ENCODE measurements at regions of chr17 and their contacts with region 1.

Region 1: DNA sequence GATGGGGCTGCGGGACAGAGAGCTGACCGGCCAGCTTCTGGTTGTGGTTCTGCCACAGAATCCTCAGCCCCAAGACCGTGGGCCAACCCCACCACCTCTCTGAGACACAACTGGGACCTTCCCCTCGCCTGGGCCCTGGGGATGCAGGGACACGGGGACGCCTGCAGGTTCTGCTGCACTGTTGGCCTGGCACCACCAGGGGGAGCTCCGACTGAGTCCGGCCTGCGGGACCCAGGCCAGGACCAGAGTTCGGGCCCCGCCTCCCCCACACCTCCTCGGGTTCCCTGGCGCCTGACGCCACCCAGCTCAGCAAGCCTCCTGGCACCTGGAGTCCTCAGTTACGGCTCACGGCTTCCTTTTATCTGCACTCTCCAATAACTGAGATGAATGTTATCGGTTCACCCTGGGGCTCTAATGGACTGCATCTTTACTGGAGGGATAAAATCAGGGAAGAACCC is 27.3 kb downstream of the TBC1D16 start:
- DNase-seq: peak; percentile 53 to 75
- ATAC-seq: peak; percentile 73 to 84
- H3K4me3 ChIP-seq: no peak overlapping the region
- H3K27ac ChIP-seq: peak overlapping the region in 2 of 4 donors; percentile 14 to 35
- H3K4me1 ChIP-seq: peaks cover 0 to 3% of the 10 kb centered on the region in 2 donors
- H3K27me3 ChIP-seq: no peaks in the 10 kb centered on the region
- CTCF ChIP-seq: peak; percentile 78 to 95 (median 90)
- POLR2A ChIP-seq: no peak

Region 2: DNA sequence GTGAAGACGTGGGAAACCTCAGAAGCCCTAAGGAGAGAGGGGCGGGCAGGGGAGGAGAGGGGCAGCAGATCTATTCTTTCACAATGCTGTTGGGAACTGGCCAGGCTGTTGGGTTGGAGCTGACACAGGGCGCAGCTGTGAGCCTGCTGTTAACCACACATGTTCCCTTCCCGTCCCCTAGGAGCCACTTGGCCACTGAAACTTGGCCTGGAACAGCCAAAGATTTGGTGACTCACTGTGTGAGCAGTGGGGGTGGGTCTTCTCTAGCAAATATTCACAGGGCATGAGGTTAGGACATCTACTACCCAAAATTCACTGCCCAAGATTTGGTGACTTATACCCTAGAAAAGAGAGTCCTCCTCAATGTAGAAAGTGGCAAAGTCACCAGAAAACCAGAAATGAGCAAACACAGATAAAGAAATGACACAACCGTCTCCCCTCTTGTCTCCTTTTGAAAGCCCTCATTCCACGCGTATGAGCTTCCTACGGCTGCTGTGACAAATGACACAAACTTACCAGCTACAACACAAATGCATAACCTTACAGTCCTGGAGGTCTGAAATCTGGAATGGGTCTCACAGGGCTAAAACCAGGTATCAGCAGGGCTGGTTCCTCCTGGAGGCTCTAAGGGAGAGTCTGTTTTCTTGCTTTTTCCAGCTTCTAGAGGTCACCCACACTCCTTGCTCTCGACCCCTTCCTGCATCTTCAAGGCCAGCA is 21.0 kb after region 1 on chr17:
- in situ Hi-C with region 1: no loop called
- intact Hi-C with region 1: loop called (anchors 2 kb)
- DNase-seq: peak; percentile 80 to 91
- ATAC-seq: peak; percentile 84 to 92
- H3K4me3 ChIP-seq: peak overlapping the region in 1 of 4 donors; percentile 24
- H3K27ac ChIP-seq: peak overlapping the region; percentile 44 to 80 (median 73)
- H3K4me1 ChIP-seq: peaks cover 27 to 29% of the 10 kb centered on the region in 2 donors
- H3K27me3 ChIP-seq: peaks cover 0 to 19% (median 17%) of the 10 kb centered on the region in 3 donors
- CTCF ChIP-seq: no peak
- POLR2A ChIP-seq: no peak

Region 3: DNA sequence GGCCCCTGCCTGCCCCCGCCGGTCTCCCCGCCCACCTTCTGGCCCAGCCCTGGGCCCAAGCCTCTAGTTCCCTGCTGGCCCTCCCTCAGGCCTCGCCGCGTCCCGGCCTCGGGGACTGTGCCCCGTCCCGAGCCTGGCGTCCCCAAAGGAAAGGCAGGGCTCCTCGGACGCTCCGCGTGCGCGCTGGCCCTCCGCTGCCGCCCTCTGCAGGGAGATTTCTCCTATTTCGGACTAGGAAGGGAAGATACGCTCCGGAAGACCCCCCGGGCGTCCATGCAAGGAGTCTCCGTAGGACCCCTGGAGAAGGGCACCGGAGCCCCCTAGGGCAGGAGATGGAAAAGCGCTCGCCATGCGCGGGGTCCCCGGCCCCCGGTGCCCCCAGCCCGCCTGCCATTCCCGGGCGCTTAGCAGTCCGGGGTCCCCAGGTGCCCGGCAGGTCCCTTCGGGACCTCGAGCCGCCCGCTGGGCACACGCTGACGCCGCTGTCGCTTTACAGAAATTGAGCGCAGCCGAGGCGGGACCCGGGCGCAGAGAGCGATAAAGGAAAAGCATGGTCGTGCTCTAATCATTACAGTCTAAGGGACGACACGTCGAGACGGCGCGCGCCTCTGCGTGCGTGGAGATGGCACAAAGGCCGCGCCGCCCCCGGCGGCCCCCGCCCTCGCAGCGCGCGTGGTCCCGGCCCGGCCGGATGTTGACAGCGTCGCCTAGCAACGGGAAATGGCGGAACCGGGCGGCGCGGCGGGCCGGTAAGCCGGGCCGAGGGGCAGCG is 27.7 kb after region 1 on chr17 and contains the start of gene CCDC40:
- in situ Hi-C with region 1: no loop called
- intact Hi-C with region 1: loop called (anchors 1 kb)
- DNase-seq: peak; percentile 67 to 70
- ATAC-seq: peak; percentile 83 to 86
- H3K4me3 ChIP-seq: peak within 1 kb of the TSS; percentile 69 to 92 (median 84)
- H3K27ac ChIP-seq: peak within 1 kb of the TSS; percentile 77 to 91 (median 84)
- H3K4me1 ChIP-seq: peaks cover 5 to 11% of the 10 kb centered on the region in 2 donors
- H3K27me3 ChIP-seq: peaks cover 0 to 14% (median 10%) of the 10 kb centered on the region in 3 donors
- CTCF ChIP-seq: no peak
- POLR2A ChIP-seq: peak; percentile 49 to 58
- total RNA-seq, gene CCDC40: 0.18 to 2.1 (median 1.1) TPM

Region 4: GRCh38 chr17:80082403-80083135 is 74.2 kb after region 1 on chr17:
- in situ Hi-C with region 1: no loop called
- intact Hi-C with region 1: loop called (anchors 2 kb)
- DNase-seq: peak in 1 of 2 donors; percentile 55
- ATAC-seq: peak; percentile 66 to 75
- H3K4me3 ChIP-seq: peak overlapping the region in 3 of 4 donors; percentile 7 to 45 (median 42)
- H3K27ac ChIP-seq: no peak overlapping the region
- H3K4me1 ChIP-seq: peaks cover 0 to 6% of the 10 kb centered on the region in 2 donors
- H3K27me3 ChIP-seq: no peaks in the 10 kb centered on the region
- CTCF ChIP-seq: peak; percentile 38 to 83 (median 68)
- POLR2A ChIP-seq: no peak

Region 5: GRCh38 chr17:80147035-80147836 is 138.8 kb after region 1 on chr17 and contains the start of gene EIF4A3:
- in situ Hi-C with region 1: no loop called
- intact Hi-C with region 1: loop called (anchors 5 kb)
- DNase-seq: peak; percentile 97 to 98
- ATAC-seq: peak; percentile 98 to 99
- H3K4me3 ChIP-seq: peak within 1 kb of the TSS; percentile 88 to 95 (median 90)
- H3K27ac ChIP-seq: peak within 1 kb of the TSS; percentile 95 to 98 (median 97)
- H3K4me1 ChIP-seq: peaks cover 15 to 16% of the 10 kb centered on the region in 2 donors
- H3K27me3 ChIP-seq: no peaks in the 10 kb centered on the region
- CTCF ChIP-seq: no peak
- POLR2A ChIP-seq: peak; percentile 93 to 94
- total RNA-seq, gene EIF4A3: 27.4 to 32.8 (median 30.0) TPM

Region 6: GRCh38 chr17:80263253-80264204 is 255.1 kb after region 1 on chr17:
- in situ Hi-C with region 1: no loop called
- intact Hi-C with region 1: loop called (anchors 10 kb)
- DNase-seq: peak; percentile 81 to 86
- ATAC-seq: peak; percentile 50 to 66
- H3K4me3 ChIP-seq: peak overlapping the region; percentile 30 to 47 (median 37)
- H3K27ac ChIP-seq: peak overlapping the region; percentile 93 to 100 (median 98)
- H3K4me1 ChIP-seq: peaks cover 24 to 34% of the 10 kb centered on the region in 2 donors
- H3K27me3 ChIP-seq: no peaks in the 10 kb centered on the region
- CTCF ChIP-seq: peak in 1 of 5 experiments; percentile 22
- POLR2A ChIP-seq: peak in 1 of 2 donors; percentile 32